CD4-positive, alpha-beta T cell (primary cell): ENCODE measurements at regions of chr9 and their contacts with region 1.

Region 1: GRCh38 chr9:134163353-134164196 is 789 bp downstream of the RNU6ATAC start:
- DNase-seq: peak; percentile 47 to 90 (median 66)
- ATAC-seq: peak; percentile 33
- H3K4me3 ChIP-seq: no peak overlapping the region
- H3K4me3 Mint-ChIP-seq: no peak overlapping the region
- H3K27ac ChIP-seq: no peak overlapping the region
- H3K27ac Mint-ChIP-seq: no peak overlapping the region
- H3K4me1 ChIP-seq: peaks cover 17% of the 10 kb centered on the region
- H3K4me1 Mint-ChIP-seq: peaks cover 17% of the 10 kb centered on the region
- H3K27me3 ChIP-seq: no peaks in the 10 kb centered on the region
- H3K27me3 Mint-ChIP-seq: peaks cover 4% of the 10 kb centered on the region
- CTCF ChIP-seq: peak; percentile 59

Region 2: GRCh38 chr9:134067904-134068743 is 95.5 kb before region 1 on chr9 and contains the start of gene BRD3:
- CTCF ChIA-PET with region 1: interaction called, 3 read pairs
- POLR2A ChIA-PET with region 1: interaction called, 7 read pairs
- intact Hi-C with region 1: loop called (anchors 1 to 2 kb)
- DNase-seq: peak; percentile 63 to 96 (median 78)
- ATAC-seq: peak; percentile 76
- H3K4me3 ChIP-seq: peak within 1 kb of the TSS; percentile 79
- H3K4me3 Mint-ChIP-seq: peak within 1 kb of the TSS; percentile 97
- H3K27ac ChIP-seq: peak within 1 kb of the TSS; percentile 79 to 84
- H3K27ac Mint-ChIP-seq: peak within 1 kb of the TSS; percentile 98
- H3K4me1 ChIP-seq: peaks cover 47% of the 10 kb centered on the region
- H3K4me1 Mint-ChIP-seq: peaks cover 37% of the 10 kb centered on the region
- H3K27me3 ChIP-seq: peaks cover 9 to 15% of the 10 kb centered on the region in 2 experiments
- H3K27me3 Mint-ChIP-seq: peaks cover 22% of the 10 kb centered on the region
- CTCF ChIP-seq: no peak
- total RNA-seq, gene BRD3: 26.7 to 29.0 TPM

Region 3: GRCh38 chr9:134325817-134326723 is 162.5 kb after region 1 on chr9 and contains the start of gene RXRA:
- CTCF ChIA-PET with region 1: no interaction called
- POLR2A ChIA-PET with region 1: no interaction called
- intact Hi-C with region 1: loop called in 1 of 2 experiments (anchors 2 kb)
- DNase-seq: peak; percentile 47 to 90 (median 66)
- ATAC-seq: peak; percentile 71
- H3K4me3 ChIP-seq: peak within 1 kb of the TSS; percentile 86
- H3K4me3 Mint-ChIP-seq: peak within 1 kb of the TSS; percentile 83
- H3K27ac ChIP-seq: peak within 1 kb of the TSS in 1 of 2 donors; percentile 2
- H3K27ac Mint-ChIP-seq: peak within 1 kb of the TSS; percentile 20
- H3K4me1 ChIP-seq: peaks cover 25% of the 10 kb centered on the region
- H3K4me1 Mint-ChIP-seq: peaks cover 8% of the 10 kb centered on the region
- H3K27me3 ChIP-seq: no peaks in the 10 kb centered on the region
- H3K27me3 Mint-ChIP-seq: no peaks in the 10 kb centered on the region
- CTCF ChIP-seq: no peak
- total RNA-seq, gene RXRA: 7.3 to 8.4 TPM

Region 4: GRCh38 chr9:134455934-134456739 is 292.6 kb after region 1 on chr9:
- CTCF ChIA-PET with region 1: no interaction called
- POLR2A ChIA-PET with region 1: interaction called, 19 read pairs
- intact Hi-C with region 1: no loop called
- DNase-seq: peak; percentile 50 to 92 (median 70)
- ATAC-seq: peak; percentile 92
- H3K4me3 ChIP-seq: peak overlapping the region; percentile 59
- H3K4me3 Mint-ChIP-seq: peak overlapping the region; percentile 78
- H3K27ac ChIP-seq: peak overlapping the region; percentile 68 to 93
- H3K27ac Mint-ChIP-seq: peak overlapping the region; percentile 91
- H3K4me1 ChIP-seq: peaks cover 26% of the 10 kb centered on the region
- H3K4me1 Mint-ChIP-seq: peaks cover 7% of the 10 kb centered on the region
- H3K27me3 ChIP-seq: no peaks in the 10 kb centered on the region
- H3K27me3 Mint-ChIP-seq: no peaks in the 10 kb centered on the region
- CTCF ChIP-seq: no peak

Region 5: GRCh38 chr9:134592018-134592818 is 428.6 kb after region 1 on chr9:
- CTCF ChIA-PET with region 1: no interaction called
- POLR2A ChIA-PET with region 1: no interaction called
- intact Hi-C with region 1: no loop called
- DNase-seq: peak in 1 of 14 experiments; percentile 25
- ATAC-seq: no peak
- H3K4me3 ChIP-seq: no peak overlapping the region
- H3K4me3 Mint-ChIP-seq: no peak overlapping the region
- H3K27ac ChIP-seq: no peak overlapping the region
- H3K27ac Mint-ChIP-seq: no peak overlapping the region
- H3K4me1 ChIP-seq: no peaks in the 10 kb centered on the region
- H3K4me1 Mint-ChIP-seq: no peaks in the 10 kb centered on the region
- H3K27me3 ChIP-seq: peaks cover 2 to 5% of the 10 kb centered on the region in 2 experiments
- H3K27me3 Mint-ChIP-seq: peaks cover 20% of the 10 kb centered on the region
- CTCF ChIP-seq: no peak

Region 6: DNA sequence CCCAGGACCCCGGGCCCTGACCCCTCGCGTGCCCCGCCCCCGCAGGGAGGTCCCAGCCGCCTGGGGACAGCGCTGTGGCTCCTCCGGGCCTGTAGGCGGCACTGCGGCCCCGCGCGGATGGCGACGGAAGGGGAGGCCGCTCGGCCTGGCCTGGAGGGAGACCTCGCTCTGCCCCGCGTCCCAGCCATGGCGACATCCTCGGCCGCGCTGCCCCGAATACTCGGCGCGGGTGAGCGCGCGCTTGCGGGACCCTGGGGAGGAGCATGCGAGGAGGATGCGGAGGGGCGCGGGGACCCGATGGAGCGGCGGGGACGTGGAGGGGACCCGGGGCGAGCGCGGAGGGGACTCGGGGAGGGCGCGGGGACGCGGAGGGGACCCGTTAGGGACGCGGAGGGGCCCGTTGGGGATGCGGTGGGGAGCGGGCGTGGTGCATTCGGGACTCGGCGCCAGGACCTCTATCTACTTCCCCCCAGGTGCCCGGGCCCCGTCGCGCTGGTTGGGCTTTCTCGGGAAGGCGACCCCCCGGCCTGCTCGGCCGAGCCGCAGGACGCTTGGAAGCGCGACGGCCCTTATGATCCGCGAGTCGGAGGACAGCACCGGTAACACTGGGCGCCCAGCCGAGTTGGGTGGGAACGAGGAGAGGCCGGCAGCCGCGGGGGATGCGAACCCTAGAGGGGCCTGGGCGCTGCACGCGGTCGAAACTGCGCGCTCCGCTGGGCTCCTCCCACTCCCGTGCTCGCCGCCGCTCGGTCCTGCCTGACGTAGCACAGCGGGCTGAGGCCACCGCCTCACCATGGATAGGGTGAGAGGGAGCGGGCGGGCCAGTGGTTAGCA is 1337.2 kb after region 1 on chr9 and contains the start of gene MRPS2:
- CTCF ChIA-PET with region 1: no interaction called
- POLR2A ChIA-PET with region 1: no interaction called
- intact Hi-C with region 1: loop called in 1 of 2 experiments (anchors 10 kb)
- DNase-seq: peak; percentile 65 to 91 (median 82)
- ATAC-seq: peak; percentile 91
- H3K4me3 ChIP-seq: peak within 1 kb of the TSS; percentile 97
- H3K4me3 Mint-ChIP-seq: peak within 1 kb of the TSS; percentile 97
- H3K27ac ChIP-seq: peak within 1 kb of the TSS in 1 of 2 donors; percentile 41
- H3K27ac Mint-ChIP-seq: peak within 1 kb of the TSS; percentile 76
- H3K4me1 ChIP-seq: peaks cover 46% of the 10 kb centered on the region
- H3K4me1 Mint-ChIP-seq: peaks cover 24% of the 10 kb centered on the region
- H3K27me3 ChIP-seq: no peaks in the 10 kb centered on the region
- H3K27me3 Mint-ChIP-seq: no peaks in the 10 kb centered on the region
- CTCF ChIP-seq: peak; percentile 83
- total RNA-seq, gene MRPS2: 20.8 to 23.2 TPM